Activated naive CD4-positive, alpha-beta T cell treated with anti-CD3 and anti-CD28 coated beads for 36 hours (primary cell): ENCODE measurements at regions of chr7 and their contacts with region 1.

Region 1: GRCh38 chr7:139340037-139340807 is 915 bp upstream of the FMC1 start:
- DNase-seq: peak; percentile 100
- H3K4me3 Mint-ChIP-seq: peak overlapping the region; percentile 93
- H3K27ac Mint-ChIP-seq: peak overlapping the region; percentile 99
- H3K4me1 Mint-ChIP-seq: peaks cover 22% of the 10 kb centered on the region
- H3K27me3 Mint-ChIP-seq: peaks cover 3% of the 10 kb centered on the region

Region 2: GRCh38 chr7:138459413-138460175 is 880.6 kb before region 1 on chr7:
- CTCF ChIA-PET with region 1: no interaction called
- intact Hi-C with region 1: loop called (anchors 1 kb)
- DNase-seq: peak; percentile 98
- H3K4me3 Mint-ChIP-seq: peak overlapping the region; percentile 94
- H3K27ac Mint-ChIP-seq: peak overlapping the region; percentile 63
- H3K4me1 Mint-ChIP-seq: peaks cover 22% of the 10 kb centered on the region
- H3K27me3 Mint-ChIP-seq: no peaks in the 10 kb centered on the region

Region 3: GRCh38 chr7:138903186-138903820 is 436.9 kb before region 1 on chr7:
- CTCF ChIA-PET with region 1: no interaction called
- intact Hi-C with region 1: loop called (anchors 2 kb)
- DNase-seq: peak; percentile 89
- H3K4me3 Mint-ChIP-seq: peak overlapping the region; percentile 70
- H3K27ac Mint-ChIP-seq: peak overlapping the region; percentile 52
- H3K4me1 Mint-ChIP-seq: peaks cover 41% of the 10 kb centered on the region
- H3K27me3 Mint-ChIP-seq: no peaks in the 10 kb centered on the region

Region 4: DNA sequence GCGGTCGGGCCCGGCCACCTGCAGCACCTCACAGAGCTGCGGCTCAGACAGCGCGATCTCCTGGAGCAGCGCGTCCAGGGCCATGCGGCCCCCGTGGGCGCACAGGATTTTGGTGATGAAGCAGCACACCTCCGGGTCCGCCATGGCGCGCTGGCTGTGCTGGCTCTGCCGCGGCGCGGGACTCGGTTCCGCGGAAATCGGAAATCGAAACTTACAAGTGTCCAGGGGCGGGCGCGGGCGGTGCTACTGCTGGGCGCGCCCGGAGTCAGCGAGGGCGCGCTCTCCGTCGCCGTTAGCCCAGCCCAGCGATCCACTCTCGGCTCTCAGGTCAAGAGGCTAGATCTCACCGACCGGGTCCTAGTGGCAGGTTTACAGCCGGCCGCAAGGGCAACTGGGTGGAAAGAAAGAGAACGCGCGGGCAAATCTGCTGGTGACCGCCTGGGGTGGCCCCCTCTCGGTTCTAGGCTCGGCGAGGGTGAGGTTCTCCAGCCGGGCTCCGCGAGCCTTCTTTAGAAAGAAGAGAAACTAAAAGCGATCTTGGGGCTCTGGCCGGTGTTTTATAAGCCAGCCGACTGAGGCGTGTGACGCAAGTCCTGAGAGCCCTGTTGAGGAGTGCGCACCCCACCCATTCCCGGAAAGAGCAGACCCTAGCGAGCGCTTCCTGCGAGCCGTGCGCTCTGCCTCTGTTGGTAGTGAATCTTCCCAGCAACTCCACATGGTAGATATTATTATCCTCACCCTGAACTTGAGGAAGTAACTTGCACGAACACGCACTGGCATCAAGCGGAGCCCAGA is 230.8 kb before region 1 on chr7 and contains the start of gene ZC3HAV1:
- CTCF ChIA-PET with region 1: no interaction called
- intact Hi-C with region 1: loop called (anchors 1 kb)
- DNase-seq: peak; percentile 90
- H3K4me3 Mint-ChIP-seq: peak within 1 kb of the TSS; percentile 92
- H3K27ac Mint-ChIP-seq: peak within 1 kb of the TSS; percentile 95
- H3K4me1 Mint-ChIP-seq: peaks cover 34% of the 10 kb centered on the region
- H3K27me3 Mint-ChIP-seq: no peaks in the 10 kb centered on the region
- total RNA-seq, gene ZC3HAV1: 131 to 134 TPM

Region 5: DNA sequence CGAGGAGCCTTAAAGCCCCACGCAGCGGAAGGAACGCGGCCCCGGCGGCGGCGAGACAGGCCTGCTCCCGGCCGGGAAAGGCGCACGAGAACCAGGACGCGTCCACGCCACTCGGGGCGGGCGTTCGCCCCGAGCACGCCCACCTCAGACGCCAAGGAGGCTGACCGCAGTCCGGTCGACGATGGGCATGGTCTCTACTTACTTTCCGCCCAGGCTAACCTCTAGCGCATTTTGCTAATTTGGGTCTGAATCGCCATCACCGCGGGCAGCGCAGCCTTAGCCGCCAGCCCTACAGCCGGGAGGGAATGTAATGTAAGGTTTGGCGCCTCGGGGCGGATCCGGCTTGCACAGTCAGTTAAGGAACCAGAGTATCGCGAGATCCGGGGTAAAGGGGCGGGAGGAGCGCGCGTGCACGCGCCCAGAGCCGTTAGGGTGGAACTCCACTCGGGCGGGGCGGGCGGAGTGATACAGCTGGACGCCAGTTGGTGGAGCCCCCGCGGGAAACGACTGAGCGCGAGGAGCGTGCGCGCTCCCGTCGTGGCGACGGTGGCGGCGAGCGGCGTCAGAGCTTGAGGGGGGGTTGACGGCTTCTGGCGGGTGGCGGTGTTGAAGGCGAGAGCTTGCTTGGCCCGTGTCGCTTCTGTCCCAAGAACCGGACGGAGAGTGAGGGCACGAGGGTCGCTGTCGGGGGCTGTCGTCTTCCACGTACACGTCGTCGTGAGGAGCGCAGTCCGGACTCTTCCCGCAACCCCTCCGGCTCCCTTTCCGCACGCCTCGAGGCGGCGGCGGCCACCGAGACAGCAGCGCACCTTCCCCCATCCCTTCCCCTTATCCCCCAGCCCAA is 19.4 kb after region 1 on chr7 and contains the start of gene LUC7L2:
- CTCF ChIA-PET with region 1: no interaction called
- intact Hi-C with region 1: loop called (anchors 1 kb)
- DNase-seq: peak; percentile 100
- H3K4me3 Mint-ChIP-seq: peak within 1 kb of the TSS; percentile 93
- H3K27ac Mint-ChIP-seq: peak within 1 kb of the TSS; percentile 98
- H3K4me1 Mint-ChIP-seq: peaks cover 33% of the 10 kb centered on the region
- H3K27me3 Mint-ChIP-seq: no peaks in the 10 kb centered on the region
- total RNA-seq, gene LUC7L2: 132 to 138 TPM

Region 6: GRCh38 chr7:139820089-139820488 is 479.9 kb after region 1 on chr7:
- CTCF ChIA-PET with region 1: no interaction called
- intact Hi-C with region 1: no loop called
- DNase-seq: no peak
- H3K4me3 Mint-ChIP-seq: no peak overlapping the region
- H3K27ac Mint-ChIP-seq: no peak overlapping the region
- H3K4me1 Mint-ChIP-seq: no peaks in the 10 kb centered on the region
- H3K27me3 Mint-ChIP-seq: no peaks in the 10 kb centered on the region

Region 7: DNA sequence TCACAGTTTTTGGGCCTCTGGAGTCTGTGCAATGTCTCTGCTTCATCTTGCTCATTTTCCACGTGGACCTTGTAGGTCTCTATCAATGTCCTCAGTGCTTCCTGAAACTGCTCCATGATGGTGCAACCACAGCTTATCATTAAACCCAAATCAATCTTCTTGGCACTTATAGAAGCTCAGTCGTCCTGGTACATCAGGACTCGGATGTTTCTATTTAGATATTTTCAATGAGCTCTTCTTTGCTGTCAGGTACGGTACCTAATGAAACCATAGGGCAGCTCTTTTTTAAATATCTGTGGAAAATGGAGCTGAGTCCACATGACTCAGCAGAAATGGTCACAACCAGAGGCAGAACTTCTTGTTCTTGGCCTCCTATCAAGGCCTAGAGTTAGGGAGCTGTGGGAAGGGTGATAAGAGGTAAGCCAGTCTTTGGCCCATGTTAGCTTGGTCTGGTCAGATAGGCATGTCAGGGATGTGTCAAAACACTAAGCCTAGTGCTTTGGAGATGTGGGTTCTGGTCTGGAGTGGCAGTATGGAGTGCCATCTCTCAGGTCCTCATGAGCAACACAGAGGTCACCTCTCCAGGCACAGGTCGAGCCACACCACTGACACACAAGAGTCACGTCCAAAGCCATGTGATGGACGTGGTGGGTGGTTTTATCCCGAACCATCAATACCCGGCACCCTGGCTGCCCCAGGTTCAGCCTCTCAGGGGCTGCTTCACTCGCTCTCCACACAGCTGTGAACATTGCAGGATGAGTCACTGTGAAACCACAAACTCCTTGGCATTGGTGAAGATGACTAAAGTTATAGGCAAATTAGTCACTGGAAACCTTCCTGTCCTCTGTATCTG is 575.9 kb after region 1 on chr7:
- CTCF ChIA-PET with region 1: no interaction called
- intact Hi-C with region 1: loop called (anchors 2 kb)
- DNase-seq: peak; percentile 87
- H3K4me3 Mint-ChIP-seq: no peak overlapping the region
- H3K27ac Mint-ChIP-seq: peak overlapping the region; percentile 19
- H3K4me1 Mint-ChIP-seq: peaks cover 24% of the 10 kb centered on the region
- H3K27me3 Mint-ChIP-seq: peaks cover 2% of the 10 kb centered on the region

Region 8: DNA sequence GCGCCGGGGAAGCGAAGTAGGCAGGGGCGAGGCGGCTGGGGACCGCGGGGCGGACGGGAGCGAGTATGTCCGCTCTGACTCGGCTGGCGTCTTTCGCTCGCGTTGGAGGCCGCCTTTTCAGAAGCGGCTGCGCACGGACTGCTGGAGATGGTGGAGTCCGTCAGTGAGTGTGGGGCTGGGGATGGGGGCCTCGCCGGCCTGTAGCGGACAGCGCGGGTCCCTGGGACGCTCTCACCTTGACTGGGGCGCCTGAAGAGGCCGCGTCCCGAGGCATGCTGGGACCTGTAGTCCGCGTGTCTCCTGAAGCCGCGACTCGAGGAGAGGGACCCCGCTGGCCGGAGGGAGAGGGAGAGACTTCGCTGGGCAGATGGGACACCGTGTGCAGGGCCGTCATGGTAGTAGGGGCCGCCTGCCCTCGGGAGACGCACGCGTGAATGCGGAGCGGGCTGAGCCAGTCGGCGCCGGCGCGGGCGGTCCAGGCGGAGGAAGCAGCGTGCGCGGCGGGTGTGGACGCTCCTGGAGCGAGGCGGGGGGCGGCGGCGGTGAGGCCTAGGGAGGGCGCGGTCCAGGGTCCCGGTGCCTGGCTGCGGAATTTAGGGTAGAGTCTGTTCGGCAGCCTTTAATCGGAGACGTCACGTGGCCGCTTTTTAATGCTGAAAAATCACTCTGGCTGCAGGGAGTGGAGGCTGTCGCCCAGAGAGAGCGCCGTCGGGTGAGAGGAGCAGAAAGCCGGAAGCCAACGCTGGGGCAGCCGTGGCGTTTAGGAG is 1356.6 kb after region 1 on chr7 and contains the start of gene NDUFB2:
- CTCF ChIA-PET with region 1: no interaction called
- intact Hi-C with region 1: no loop called
- DNase-seq: peak; percentile 75
- H3K4me3 Mint-ChIP-seq: peak within 1 kb of the TSS; percentile 98
- H3K27ac Mint-ChIP-seq: peak within 1 kb of the TSS; percentile 99
- H3K4me1 Mint-ChIP-seq: peaks cover 34% of the 10 kb centered on the region
- H3K27me3 Mint-ChIP-seq: no peaks in the 10 kb centered on the region
- total RNA-seq, gene NDUFB2: 167 to 179 TPM

Region 9: DNA sequence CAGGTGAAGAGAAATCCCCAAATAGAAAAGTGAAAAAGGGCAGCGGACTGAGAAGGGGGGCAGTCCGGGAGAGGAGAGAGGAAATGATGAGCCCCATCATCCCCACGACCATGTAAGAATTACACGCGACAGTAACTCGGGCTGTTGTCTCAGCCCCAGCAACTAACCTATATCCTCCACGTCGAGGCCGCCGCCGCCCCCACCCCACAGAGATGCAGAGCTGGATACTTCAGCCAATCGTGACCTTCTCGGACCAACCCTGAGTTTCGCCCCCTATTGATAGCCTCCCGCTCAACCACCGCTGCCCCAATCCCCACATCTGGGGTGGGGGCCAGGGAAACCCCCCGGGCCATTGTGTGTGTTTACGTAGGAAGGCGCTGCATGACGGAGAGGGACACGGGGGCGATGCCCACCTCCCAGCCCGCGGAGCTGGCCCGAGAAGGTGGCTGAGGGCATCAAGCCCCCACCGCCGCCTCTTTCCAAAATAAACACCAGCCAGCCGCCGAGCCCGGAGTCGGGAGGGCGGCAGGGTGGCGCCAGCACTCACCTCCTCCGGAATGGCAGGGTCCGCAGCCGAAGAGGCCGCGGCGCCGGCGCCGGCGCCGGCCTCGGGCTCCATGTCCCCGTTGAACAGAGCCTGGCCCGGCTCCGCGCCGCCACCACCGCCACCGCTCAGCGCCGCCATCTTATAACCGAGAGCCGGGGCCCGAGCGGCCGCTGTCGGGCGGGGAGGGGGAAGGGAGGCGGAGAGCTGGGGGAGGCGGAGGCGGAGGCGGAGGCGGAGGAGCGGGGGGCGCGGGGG is 1584.0 kb after region 1 on chr7:
- CTCF ChIA-PET with region 1: no interaction called
- intact Hi-C with region 1: loop called (anchors 1 kb)
- DNase-seq: peak; percentile 77
- H3K4me3 Mint-ChIP-seq: no peak overlapping the region
- H3K27ac Mint-ChIP-seq: no peak overlapping the region
- H3K4me1 Mint-ChIP-seq: peaks cover 10% of the 10 kb centered on the region
- H3K27me3 Mint-ChIP-seq: no peaks in the 10 kb centered on the region